Panc1 (cell line): ENCODE measurements at regions of chr3 and their contacts with region 1.

Region 1: DNA sequence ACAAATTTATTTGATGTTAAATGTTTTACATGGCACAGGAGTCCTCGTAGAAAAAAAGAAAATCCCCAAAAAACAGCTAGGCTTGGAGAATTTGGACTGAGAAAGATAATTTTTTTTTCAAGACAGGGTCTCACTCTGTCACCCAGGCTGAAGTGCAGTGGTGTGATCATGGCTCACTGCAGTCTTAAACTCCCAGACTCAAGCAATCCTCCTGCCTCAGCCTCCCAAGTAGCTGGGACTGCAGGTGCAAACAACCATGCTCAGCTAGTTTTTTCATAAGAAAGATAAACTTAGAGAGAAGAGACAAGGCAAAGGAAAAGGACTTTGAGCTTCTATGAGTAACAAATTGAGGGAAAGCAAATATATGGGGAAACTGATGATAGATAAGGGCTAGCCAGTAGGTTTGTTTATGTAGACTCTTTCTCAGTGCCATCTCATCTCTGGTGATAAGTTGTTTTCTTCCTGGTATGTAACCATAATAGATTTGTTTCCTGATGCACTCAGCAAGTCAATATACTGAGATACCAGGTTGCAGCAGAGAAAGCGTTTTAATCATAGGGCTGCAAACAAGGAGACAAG is 13.1 kb upstream of the TRMT10C start:
- DNase-seq: no peak
- ATAC-seq: no peak
- H3K4me3 ChIP-seq: no peak overlapping the region
- H3K27ac ChIP-seq: no peak overlapping the region
- H3K4me1 ChIP-seq: no peaks in the 10 kb centered on the region
- H3K27me3 ChIP-seq: no peaks in the 10 kb centered on the region; the same call in 1 of the 2 replicates
- CTCF ChIP-seq: no peak

Region 2: DNA sequence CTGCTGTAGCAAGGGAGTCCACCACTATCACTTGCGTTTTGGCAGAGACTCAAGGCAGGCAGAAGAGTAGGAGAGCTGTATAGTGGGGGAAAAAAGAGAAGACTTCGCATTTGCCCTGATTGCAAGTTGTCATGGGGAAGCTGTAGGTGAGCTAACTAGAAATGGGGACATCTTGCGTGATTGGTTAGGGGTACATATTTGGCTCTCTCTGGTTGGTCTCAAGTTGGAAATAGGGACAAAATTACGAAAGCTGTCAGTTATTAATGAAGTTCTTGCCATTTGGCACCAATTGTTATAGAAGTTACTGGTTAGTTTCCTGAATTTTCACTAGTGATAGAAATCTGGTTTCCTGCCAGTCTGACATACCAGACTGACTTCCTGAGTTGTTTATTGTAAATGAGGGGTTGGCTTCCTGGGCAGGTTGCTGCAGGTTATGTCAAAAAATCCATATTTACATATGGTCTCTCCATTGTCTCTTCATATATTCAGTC is 27.4 kb before region 1 on chr3:
- CTCF ChIA-PET with region 1: no interaction called
- POLR2A ChIA-PET with region 1: interaction called, 14 read pairs
- in situ Hi-C with region 1: no loop called
- intact Hi-C with region 1: no loop called
- DNase-seq: no peak
- ATAC-seq: no peak
- H3K4me3 ChIP-seq: no peak overlapping the region
- H3K27ac ChIP-seq: no peak overlapping the region
- H3K4me1 ChIP-seq: no peaks in the 10 kb centered on the region
- H3K27me3 ChIP-seq: no peaks in the 10 kb centered on the region
- CTCF ChIP-seq: no peak